Natural killer cell (primary cell): ENCODE measurements at regions of chr20 and their contacts with region 1.

Region 1: DNA sequence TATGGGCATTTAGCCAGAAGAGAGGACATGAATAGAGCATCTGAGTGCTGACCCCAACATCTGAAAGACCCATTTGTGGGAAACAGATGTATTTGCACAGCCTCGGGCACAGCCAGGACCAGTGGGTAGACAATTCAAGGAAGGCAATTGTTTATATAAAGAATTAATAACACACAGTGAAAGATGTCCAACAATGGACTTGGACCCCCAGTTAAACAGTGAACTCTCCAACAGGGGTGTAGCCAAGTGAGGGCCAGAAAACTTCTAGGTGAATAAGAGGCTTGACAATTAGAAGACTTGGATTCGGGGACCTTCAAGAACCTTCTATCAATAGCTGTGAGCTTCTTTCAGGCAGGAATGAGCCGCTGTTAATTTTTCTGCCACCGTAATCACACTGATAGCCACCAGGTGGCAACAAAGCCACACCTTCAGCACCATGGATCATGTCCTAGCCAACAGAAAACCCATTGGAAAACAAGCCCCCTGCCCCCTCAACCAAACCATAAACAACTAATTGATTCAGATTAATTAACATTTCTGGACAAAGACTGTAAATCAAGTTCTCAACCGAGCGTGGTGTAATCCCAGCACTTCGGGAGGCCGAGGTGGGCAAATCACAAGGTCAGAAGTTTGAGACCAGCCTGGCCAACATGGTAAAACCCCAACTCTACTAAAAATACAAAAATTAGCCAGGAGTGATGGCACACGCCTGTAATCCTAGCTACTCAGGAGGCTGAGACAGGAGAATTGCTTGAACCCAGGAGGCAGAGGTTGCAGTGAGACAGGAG is 8.8 kb upstream of the SRSF6 start:
- DNase-seq: peak; percentile 27 to 73
- ATAC-seq: peak; percentile 70 to 83 (median 78)
- H3K4me3 ChIP-seq: no peak overlapping the region
- H3K4me3 Mint-ChIP-seq: no peak overlapping the region
- H3K27ac ChIP-seq: no peak overlapping the region
- H3K27ac Mint-ChIP-seq: no peak overlapping the region
- H3K4me1 ChIP-seq: no peaks in the 10 kb centered on the region
- H3K4me1 Mint-ChIP-seq: peaks cover 0 to 4% of the 10 kb centered on the region in 2 donors
- H3K27me3 ChIP-seq: no peaks in the 10 kb centered on the region
- H3K27me3 Mint-ChIP-seq: peaks cover 18 to 23% of the 10 kb centered on the region in 2 donors
- CTCF ChIP-seq: peak; percentile 68

Region 2: DNA sequence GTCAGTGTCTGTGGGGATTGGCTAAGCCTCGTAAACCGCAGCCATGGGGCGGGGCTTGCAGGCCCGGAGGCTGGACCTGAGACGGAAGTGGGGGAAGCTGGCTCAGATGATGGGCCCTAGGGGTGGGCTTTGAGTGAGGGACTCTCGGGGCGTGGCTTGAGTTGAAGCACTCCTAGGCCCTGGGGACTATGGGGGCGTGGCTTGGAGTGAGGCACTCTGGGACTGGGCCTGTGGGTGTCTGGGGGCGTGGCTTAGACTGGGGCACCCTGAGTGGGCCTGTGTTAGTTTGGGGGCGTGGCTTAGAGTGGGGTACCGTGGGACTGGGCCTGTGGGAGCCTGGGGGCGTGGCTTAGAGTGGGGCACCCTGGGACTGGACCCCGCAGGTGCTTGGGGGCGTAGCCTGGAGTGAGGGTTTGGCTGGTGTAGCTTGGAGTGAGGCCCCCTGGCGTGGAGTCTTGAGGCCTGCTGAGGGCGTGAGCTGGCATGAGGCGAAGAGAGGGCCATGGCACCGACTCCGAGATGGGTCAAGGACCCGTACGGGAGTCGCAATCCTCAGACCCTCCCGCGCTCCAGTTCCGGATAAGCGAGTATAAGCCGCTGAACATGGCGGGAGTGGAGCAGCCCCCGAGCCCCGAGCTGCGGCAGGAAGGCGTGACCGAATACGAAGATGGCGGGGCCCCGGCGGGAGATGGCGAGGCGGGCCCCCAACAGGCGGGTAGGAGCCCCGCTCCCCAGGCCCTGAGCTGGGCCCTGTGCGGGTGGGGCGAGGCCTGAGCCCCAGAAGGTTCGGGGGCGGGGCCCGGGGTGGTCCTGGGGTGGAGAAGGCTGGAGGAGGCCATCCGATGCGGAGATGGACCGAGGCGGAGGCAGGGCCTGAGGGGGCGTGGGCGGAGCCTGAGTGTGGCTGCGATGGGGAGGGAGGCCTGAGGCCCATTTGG is 65.4 kb after region 1 on chr20:
- intact Hi-C with region 1: loop called (anchors 2 kb)
- DNase-seq: peak; percentile 89 to 96
- ATAC-seq: peak; percentile 87 to 97 (median 89)
- H3K4me3 ChIP-seq: peak overlapping the region; percentile 57
- H3K4me3 Mint-ChIP-seq: peak overlapping the region; percentile 98
- H3K27ac ChIP-seq: peak overlapping the region; percentile 37
- H3K27ac Mint-ChIP-seq: peak overlapping the region; percentile 87 to 89
- H3K4me1 ChIP-seq: peaks cover 14% of the 10 kb centered on the region
- H3K4me1 Mint-ChIP-seq: peaks cover 6 to 25% of the 10 kb centered on the region in 2 donors
- H3K27me3 ChIP-seq: no peaks in the 10 kb centered on the region
- H3K27me3 Mint-ChIP-seq: peaks cover under 1 to 2% of the 10 kb centered on the region in 2 donors
- CTCF ChIP-seq: peak; percentile 13